Activated CD8-positive, alpha-beta T cell treated with anti-CD3 and anti-CD28 coated beads for 36 hours (primary cell): ENCODE measurements at regions of chr1 and their contacts with region 1.

Region 1: DNA sequence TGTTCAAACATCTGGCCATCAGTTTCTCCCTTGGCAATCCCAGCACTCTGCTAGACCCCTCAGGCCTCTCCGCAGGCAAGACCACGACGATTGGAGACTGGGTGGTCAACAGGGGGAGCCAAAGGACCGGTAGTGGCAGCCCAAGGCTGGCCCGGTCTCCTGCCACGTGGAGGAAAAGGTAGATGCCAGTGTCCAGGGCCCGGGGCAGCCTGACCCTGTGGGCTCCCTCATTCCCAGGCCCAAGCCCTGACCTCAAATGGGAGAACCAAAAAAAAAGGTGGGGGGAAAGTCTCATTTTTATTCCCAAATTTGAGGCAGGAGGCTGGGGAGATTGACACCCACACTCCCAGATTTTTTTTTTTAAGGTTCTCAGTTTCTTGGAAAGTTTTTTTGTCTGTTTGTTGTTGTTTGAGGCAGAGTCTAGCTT is 24.8 kb downstream of the S100A6 start:
- DNase-seq: peak; percentile 88
- ATAC-seq: peak; percentile 94
- H3K4me3 Mint-ChIP-seq: no peak overlapping the region
- H3K27ac Mint-ChIP-seq: peak overlapping the region; percentile 66
- H3K4me1 Mint-ChIP-seq: peaks cover 7% of the 10 kb centered on the region
- H3K27me3 Mint-ChIP-seq: no peaks in the 10 kb centered on the region
- CTCF ChIP-seq: peak; percentile 99

Region 2: DNA sequence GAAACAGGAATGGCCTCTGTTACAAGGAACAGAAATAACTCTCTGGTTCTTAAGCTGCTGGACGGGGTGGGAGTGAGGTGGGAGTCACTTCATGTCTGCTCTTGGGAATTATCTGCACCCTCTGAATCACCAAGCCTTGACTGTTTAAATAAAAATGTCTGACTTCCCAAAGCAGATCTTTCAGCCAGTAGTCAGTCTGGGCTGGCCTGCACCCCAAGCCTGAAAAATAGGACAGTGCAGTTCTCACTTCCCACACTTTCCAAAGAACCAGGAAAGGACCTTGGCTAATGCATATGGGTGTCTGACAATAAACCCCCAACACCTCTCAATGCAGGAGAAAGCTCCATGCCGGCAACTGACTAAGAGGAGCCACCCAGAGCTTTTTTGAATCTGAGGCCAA is 51.3 kb before region 1 on chr1:
- CTCF ChIA-PET with region 1: no interaction called
- POLR2A ChIA-PET with region 1: no interaction called
- intact Hi-C with region 1: no loop called
- DNase-seq: no peak
- ATAC-seq: no peak
- H3K4me3 Mint-ChIP-seq: no peak overlapping the region
- H3K27ac Mint-ChIP-seq: no peak overlapping the region
- H3K4me1 Mint-ChIP-seq: no peaks in the 10 kb centered on the region
- H3K27me3 Mint-ChIP-seq: peaks cover 13% of the 10 kb centered on the region
- CTCF ChIP-seq: no peak

Region 3: GRCh38 chr1:153494976-153495535 is 15.9 kb before region 1 on chr1:
- CTCF ChIA-PET with region 1: interaction called, 16 read pairs
- POLR2A ChIA-PET with region 1: no interaction called
- intact Hi-C with region 1: no loop called
- DNase-seq: peak; percentile 86
- ATAC-seq: peak; percentile 83
- H3K4me3 Mint-ChIP-seq: no peak overlapping the region
- H3K27ac Mint-ChIP-seq: no peak overlapping the region
- H3K4me1 Mint-ChIP-seq: no peaks in the 10 kb centered on the region
- H3K27me3 Mint-ChIP-seq: peaks cover 21% of the 10 kb centered on the region
- CTCF ChIP-seq: peak; percentile 89

Region 4: DNA sequence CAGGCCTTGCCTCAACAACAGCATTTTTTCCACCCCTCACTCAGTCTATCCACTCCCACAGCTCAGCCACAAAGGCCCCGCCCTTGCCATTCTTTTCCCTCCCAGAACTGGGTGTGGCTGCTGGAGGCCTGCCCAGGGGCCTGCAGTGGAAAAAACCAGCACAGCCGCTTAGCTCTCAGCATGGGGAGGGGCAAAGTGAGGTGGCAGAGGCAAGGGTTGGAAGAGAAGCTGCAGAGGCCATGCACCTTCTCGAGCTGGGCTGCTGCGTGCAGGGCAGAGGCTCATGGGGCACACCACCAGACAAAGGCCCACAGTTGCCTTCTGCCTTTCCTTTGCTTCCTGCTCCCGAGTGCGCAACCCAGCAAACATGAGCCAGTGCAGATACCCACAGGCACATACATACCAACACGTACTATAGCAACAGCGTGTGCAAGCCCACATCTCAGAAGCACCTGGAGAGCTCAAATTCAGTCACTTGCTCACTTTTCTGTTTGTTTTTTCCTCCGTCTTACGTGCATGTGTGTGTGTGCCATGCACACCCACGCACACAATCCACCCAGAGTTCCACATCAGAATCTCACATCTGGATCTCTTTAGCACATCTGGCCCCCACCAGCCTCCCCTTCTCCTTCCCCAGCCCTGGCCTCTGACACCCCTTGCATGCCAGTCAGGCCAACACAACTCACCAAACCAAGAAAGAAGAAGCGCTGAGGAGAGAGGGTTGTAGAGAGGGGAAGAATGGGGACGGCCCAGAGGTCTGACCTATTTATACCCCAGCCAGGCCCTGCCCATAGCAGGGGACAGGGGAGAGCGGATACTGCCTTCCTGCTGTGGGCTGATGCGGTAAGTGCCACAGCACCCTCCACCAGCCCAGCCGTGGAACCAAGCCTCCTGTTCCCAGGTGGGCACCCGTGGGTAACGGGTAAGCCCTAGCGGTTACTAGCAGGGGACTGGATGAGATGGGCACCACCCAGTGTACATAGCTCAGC is 34.4 kb after region 1 on chr1 and contains the start of gene S100A4:
- CTCF ChIA-PET with region 1: interaction called, 30 read pairs
- POLR2A ChIA-PET with region 1: interaction called, 3 read pairs
- intact Hi-C with region 1: no loop called
- DNase-seq: peak; percentile 97
- ATAC-seq: peak; percentile 84
- H3K4me3 Mint-ChIP-seq: peak within 1 kb of the TSS; percentile 90
- H3K27ac Mint-ChIP-seq: peak within 1 kb of the TSS; percentile 99
- H3K4me1 Mint-ChIP-seq: peaks cover 67% of the 10 kb centered on the region
- H3K27me3 Mint-ChIP-seq: no peaks in the 10 kb centered on the region
- CTCF ChIP-seq: no peak
- total RNA-seq, gene S100A4: 109 to 118 TPM

Region 5: DNA sequence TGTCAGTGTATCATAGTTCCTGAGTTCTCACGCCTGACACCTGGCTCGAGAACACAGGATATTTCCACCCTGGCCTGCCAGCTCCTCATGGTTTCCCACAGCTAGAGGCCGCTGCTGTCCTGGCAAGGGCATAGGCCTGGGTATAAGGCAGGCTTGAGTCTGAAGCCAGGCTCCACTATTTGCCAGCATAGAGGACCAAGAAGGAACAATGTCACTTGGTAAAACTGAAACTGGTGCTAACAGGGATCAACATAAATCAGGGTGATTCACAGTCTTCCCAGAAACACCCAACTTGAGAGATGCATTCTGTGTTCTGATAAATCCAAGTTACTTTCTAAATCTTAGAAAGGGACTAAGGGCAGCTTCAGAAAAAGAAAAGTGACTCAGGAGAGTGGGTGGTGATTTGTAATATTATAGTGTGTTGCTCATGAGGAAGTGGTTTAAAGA is 61.6 kb after region 1 on chr1:
- CTCF ChIA-PET with region 1: interaction called, 81 read pairs
- POLR2A ChIA-PET with region 1: interaction called, 3 read pairs
- intact Hi-C with region 1: no loop called
- DNase-seq: peak; percentile 78
- ATAC-seq: peak; percentile 79
- H3K4me3 Mint-ChIP-seq: no peak overlapping the region
- H3K27ac Mint-ChIP-seq: peak overlapping the region; percentile 69
- H3K4me1 Mint-ChIP-seq: peaks cover 34% of the 10 kb centered on the region
- H3K27me3 Mint-ChIP-seq: peaks cover 8% of the 10 kb centered on the region
- CTCF ChIP-seq: peak; percentile 67

Region 6: GRCh38 chr1:153597206-153597605 is 86.2 kb after region 1 on chr1:
- CTCF ChIA-PET with region 1: interaction called, 12 read pairs
- POLR2A ChIA-PET with region 1: no interaction called
- intact Hi-C with region 1: no loop called
- DNase-seq: peak; percentile 45
- ATAC-seq: peak; percentile 85
- H3K4me3 Mint-ChIP-seq: no peak overlapping the region
- H3K27ac Mint-ChIP-seq: no peak overlapping the region
- H3K4me1 Mint-ChIP-seq: peaks cover 16% of the 10 kb centered on the region
- H3K27me3 Mint-ChIP-seq: no peaks in the 10 kb centered on the region
- CTCF ChIP-seq: no peak

Region 7: DNA sequence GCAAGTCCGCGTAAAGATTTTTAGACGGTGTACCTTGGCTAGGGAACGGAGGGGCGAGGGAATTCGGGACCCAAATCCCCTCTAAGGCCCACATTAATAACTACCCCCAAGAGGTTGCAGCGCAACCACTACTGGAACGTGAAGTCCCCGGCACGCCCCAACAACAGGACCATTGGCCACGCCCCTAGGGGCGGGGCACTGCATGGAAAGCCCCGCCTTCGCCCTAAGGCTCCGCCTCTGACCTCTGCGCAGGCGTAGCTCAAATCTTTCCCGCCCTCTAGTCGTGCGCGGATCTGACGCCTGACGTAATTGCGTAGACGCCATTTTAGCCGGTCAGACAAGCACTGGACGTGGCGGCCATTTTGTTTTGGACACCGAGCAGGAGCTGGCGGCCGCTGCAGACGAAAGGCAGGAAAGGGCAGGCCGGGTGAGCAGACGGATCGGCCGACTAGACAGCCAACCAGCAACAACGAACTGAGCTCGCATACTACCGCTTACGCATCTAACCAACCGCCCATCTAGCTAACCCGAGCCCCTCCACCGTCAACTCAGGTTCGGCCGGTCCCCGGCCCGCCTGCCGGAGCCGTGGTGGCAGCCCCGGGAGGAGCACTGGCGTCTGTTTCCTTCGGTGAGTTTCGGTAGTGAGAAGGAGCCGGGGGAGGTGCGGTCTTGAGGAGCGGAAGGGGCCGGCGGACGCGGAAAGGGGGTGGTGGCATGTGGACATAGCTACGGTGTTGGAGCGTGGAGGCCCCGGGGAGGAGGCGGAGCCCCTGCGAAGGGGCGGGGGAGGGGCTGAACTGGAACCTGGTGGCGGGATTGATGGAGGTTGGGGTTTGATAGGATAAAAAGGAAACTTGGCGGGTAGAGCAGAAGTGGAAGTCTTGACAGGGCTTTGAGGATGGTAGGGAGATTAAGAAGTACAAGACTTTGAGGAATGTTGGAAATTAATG is 123.0 kb after region 1 on chr1 and contains the start of gene CHTOP:
- CTCF ChIA-PET with region 1: interaction called, 19 read pairs
- POLR2A ChIA-PET with region 1: interaction called, 3 read pairs
- intact Hi-C with region 1: no loop called
- DNase-seq: peak; percentile 98
- ATAC-seq: peak; percentile 95
- H3K4me3 Mint-ChIP-seq: peak within 1 kb of the TSS; percentile 100
- H3K27ac Mint-ChIP-seq: peak within 1 kb of the TSS; percentile 99
- H3K4me1 Mint-ChIP-seq: peaks cover 45% of the 10 kb centered on the region
- H3K27me3 Mint-ChIP-seq: no peaks in the 10 kb centered on the region
- CTCF ChIP-seq: no peak
- total RNA-seq, gene CHTOP: 76.8 to 83.2 TPM

Region 8: GRCh38 chr1:153842006-153842471 is 331.0 kb after region 1 on chr1:
- CTCF ChIA-PET with region 1: no interaction called
- POLR2A ChIA-PET with region 1: no interaction called
- intact Hi-C with region 1: no loop called
- DNase-seq: no peak
- ATAC-seq: no peak
- H3K4me3 Mint-ChIP-seq: no peak overlapping the region
- H3K27ac Mint-ChIP-seq: peak overlapping the region; percentile 36
- H3K4me1 Mint-ChIP-seq: peaks cover 32% of the 10 kb centered on the region
- H3K27me3 Mint-ChIP-seq: no peaks in the 10 kb centered on the region
- CTCF ChIP-seq: no peak